PC-3 (cell line): ENCODE measurements at regions of chr11 and their contacts with region 1.

Region 1: GRCh38 chr11:2699531-2700414 is at the start of gene KCNQ1OT1:
- DNase-seq: peak; percentile 92
- ATAC-seq: peak; percentile 90
- H3K4me3 ChIP-seq: peak within 1 kb of the TSS; percentile 94
- H3K27ac ChIP-seq: peak within 1 kb of the TSS; percentile 78
- H3K4me1 ChIP-seq: peaks cover 13% of the 10 kb centered on the region; the same call in 1 of the 2 replicates
- H3K27me3 ChIP-seq: no peaks in the 10 kb centered on the region
- CTCF ChIP-seq: no peak
- total RNA-seq, gene KCNQ1OT1: 1.5 and 1.7 TPM in 2 replicates

Region 2: GRCh38 chr11:2522671-2523141 is 177.1 kb before region 1 on chr11:
- CTCF ChIA-PET with region 1: no interaction called
- POLR2A ChIA-PET with region 1: no interaction called
- intact Hi-C with region 1: no loop called
- DNase-seq: no peak
- ATAC-seq: no peak
- H3K4me3 ChIP-seq: no peak overlapping the region
- H3K27ac ChIP-seq: no peak overlapping the region
- H3K4me1 ChIP-seq: no peaks in the 10 kb centered on the region
- H3K27me3 ChIP-seq: no peaks in the 10 kb centered on the region
- CTCF ChIP-seq: no peak

Region 3: GRCh38 chr11:2549876-2550620 is 149.7 kb before region 1 on chr11:
- CTCF ChIA-PET with region 1: no interaction called
- POLR2A ChIA-PET with region 1: no interaction called
- intact Hi-C with region 1: no loop called
- DNase-seq: no peak
- ATAC-seq: no peak
- H3K4me3 ChIP-seq: no peak overlapping the region
- H3K27ac ChIP-seq: no peak overlapping the region
- H3K4me1 ChIP-seq: no peaks in the 10 kb centered on the region
- H3K27me3 ChIP-seq: no peaks in the 10 kb centered on the region
- CTCF ChIP-seq: no peak

Region 4: GRCh38 chr11:2885676-2886081 is 185.9 kb after region 1 on chr11 and contains the start of gene CDKN1C:
- CTCF ChIA-PET with region 1: no interaction called
- POLR2A ChIA-PET with region 1: no interaction called
- intact Hi-C with region 1: loop called (anchors 2 kb)
- DNase-seq: peak; percentile 75
- ATAC-seq: peak; percentile 59
- H3K4me3 ChIP-seq: peak within 1 kb of the TSS; percentile 82
- H3K27ac ChIP-seq: no peak within 1 kb of the TSS
- H3K4me1 ChIP-seq: peaks cover 11% of the 10 kb centered on the region
- H3K27me3 ChIP-seq: no peaks in the 10 kb centered on the region
- CTCF ChIP-seq: no peak
- total RNA-seq, gene CDKN1C: 12.0 and 12.9 TPM in 2 replicates